ENCODE measurements at regions of chr2 and their contacts with region 1.

Region 1: DNA sequence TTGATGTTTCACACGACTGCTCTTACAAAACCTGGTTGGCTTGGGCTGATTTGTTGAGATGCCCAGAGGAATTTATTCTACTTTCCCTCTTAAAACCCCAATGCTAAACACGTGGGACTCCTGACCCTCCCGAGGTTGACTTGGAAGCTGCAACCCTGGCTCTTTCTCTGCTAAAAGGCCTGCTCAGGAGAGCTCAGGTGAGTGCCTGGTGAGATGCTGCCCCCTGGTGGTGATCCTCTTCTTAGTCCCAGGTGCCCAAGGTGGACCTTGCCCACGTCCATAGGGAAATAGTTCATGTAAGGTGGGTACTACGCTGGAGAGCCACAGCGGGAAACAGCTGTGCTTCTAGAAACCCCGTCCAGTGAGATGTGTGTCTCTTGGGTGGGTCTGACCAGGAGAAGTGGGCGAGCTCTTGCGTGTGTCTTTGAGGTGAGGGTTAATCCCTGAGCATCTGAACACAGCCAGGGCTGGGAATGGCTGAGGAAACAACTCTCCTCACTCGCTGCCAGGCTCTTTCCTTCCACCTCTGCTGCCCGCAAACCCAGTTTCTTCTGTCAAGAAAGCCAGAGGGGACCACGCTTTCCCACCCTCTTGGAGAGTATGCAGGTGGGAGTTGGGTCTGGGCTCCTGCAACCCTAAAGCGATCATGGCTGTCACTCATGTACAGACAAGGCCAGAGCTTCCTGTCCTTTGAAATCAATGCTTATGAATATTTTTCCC is 25.5 kb upstream of the PXDN start:
- DNase-seq: peak; percentile 93
- H3K4me3 ChIP-seq: no peak overlapping the region; a peak in 1 of 4 replicates
- H3K27ac ChIP-seq: no peak overlapping the region
- H3K4me1 ChIP-seq: no peaks in the 10 kb centered on the region; a peak in 1 of 4 replicates
- H3K27me3 ChIP-seq: no peaks in the 10 kb centered on the region
- CTCF ChIP-seq: peak; percentile 94
- EP300 ChIP-seq: no peak
- RAD21 ChIP-seq: peak; percentile 93

Region 2: GRCh38 chr2:1544478-1545069 is 225.3 kb before region 1 on chr2:
- CTCF ChIA-PET with region 1: interaction called, 122 read pairs
- POLR2A ChIA-PET with region 1: no interaction called
- DNase-seq: no peak
- H3K4me3 ChIP-seq: no peak overlapping the region
- H3K27ac ChIP-seq: no peak overlapping the region
- H3K4me1 ChIP-seq: peaks cover 0 to 34% of the 10 kb centered on the region in 2 experiments; a peak in 2 of 4 replicates
- H3K27me3 ChIP-seq: no peaks in the 10 kb centered on the region
- CTCF ChIP-seq: no peak
- EP300 ChIP-seq: no peak
- RAD21 ChIP-seq: no peak

Region 3: GRCh38 chr2:1591978-1592907 is 177.6 kb before region 1 on chr2:
- CTCF ChIA-PET with region 1: interaction called, 82 read pairs
- POLR2A ChIA-PET with region 1: no interaction called
- DNase-seq: peak; percentile 83
- H3K4me3 ChIP-seq: no peak overlapping the region
- H3K27ac ChIP-seq: no peak overlapping the region
- H3K4me1 ChIP-seq: peaks cover 14 to 44% of the 10 kb centered on the region in 2 experiments; a peak in 2 of 4 replicates
- H3K27me3 ChIP-seq: no peaks in the 10 kb centered on the region
- CTCF ChIP-seq: peak; percentile 50
- EP300 ChIP-seq: 0 out of 4 replicates have a peak, but pooled peaks of 1 of the 2 experiments have one; percentile 8
- RAD21 ChIP-seq: peak; percentile 75

Region 4: GRCh38 chr2:1653956-1654695 is 115.7 kb before region 1 on chr2:
- CTCF ChIA-PET with region 1: no interaction called
- POLR2A ChIA-PET with region 1: no interaction called
- DNase-seq: no peak
- H3K4me3 ChIP-seq: no peak overlapping the region
- H3K27ac ChIP-seq: peak overlapping the region in 1 of 2 experiments; percentile 81; a peak in 2 of 4 replicates
- H3K4me1 ChIP-seq: peaks cover 0 to 24% of the 10 kb centered on the region in 2 experiments; a peak in 2 of 4 replicates
- H3K27me3 ChIP-seq: no peaks in the 10 kb centered on the region
- CTCF ChIP-seq: no peak
- EP300 ChIP-seq: no peak
- RAD21 ChIP-seq: no peak

Region 5: DNA sequence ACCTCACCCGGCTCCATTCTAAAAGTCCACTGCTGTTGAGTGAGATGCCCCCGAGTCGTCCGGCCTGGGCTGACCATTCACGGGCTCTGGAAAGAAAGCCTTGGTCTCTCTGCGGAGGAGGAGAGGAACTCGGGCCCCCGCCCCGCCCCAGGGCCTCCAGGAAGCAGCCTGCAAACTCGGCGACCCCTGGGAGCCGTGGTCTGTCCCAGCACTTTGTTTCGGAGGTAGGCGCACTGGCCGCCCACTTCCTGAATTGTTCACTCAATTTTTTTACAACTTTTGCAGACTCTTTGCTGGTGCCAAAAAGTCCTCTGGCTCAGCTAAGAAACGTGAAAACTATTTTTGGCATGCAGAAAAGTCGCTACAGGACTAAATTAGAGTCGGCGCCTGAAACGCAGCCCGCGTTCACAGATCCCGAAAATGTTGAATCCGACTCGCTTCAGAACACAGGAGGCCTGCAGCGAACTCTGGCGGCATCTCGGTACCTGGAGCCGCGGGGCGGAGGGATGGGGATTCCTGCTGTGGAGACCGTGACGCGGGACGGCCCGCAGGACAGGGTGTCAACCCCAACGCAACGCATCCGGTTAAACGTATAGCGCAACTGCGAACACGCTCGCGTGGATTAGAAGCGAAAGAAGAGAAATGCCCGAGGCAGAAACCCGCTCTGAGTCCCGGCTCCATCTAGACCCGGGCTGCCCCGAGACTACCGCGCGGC is 27.0 kb before region 1 on chr2:
- CTCF ChIA-PET with region 1: interaction called, 15 read pairs
- POLR2A ChIA-PET with region 1: no interaction called
- DNase-seq: peak; percentile 89
- H3K4me3 ChIP-seq: peak overlapping the region; percentile 84 to 91
- H3K27ac ChIP-seq: peak overlapping the region; percentile 95 to 98
- H3K4me1 ChIP-seq: peaks cover 30 to 57% of the 10 kb centered on the region in 2 experiments; a peak in 3 of 4 replicates
- H3K27me3 ChIP-seq: no peaks in the 10 kb centered on the region
- CTCF ChIP-seq: peak; percentile 84
- EP300 ChIP-seq: no peak; a peak in 2 of 4 replicates
- RAD21 ChIP-seq: peak; percentile 87

Region 6: DNA sequence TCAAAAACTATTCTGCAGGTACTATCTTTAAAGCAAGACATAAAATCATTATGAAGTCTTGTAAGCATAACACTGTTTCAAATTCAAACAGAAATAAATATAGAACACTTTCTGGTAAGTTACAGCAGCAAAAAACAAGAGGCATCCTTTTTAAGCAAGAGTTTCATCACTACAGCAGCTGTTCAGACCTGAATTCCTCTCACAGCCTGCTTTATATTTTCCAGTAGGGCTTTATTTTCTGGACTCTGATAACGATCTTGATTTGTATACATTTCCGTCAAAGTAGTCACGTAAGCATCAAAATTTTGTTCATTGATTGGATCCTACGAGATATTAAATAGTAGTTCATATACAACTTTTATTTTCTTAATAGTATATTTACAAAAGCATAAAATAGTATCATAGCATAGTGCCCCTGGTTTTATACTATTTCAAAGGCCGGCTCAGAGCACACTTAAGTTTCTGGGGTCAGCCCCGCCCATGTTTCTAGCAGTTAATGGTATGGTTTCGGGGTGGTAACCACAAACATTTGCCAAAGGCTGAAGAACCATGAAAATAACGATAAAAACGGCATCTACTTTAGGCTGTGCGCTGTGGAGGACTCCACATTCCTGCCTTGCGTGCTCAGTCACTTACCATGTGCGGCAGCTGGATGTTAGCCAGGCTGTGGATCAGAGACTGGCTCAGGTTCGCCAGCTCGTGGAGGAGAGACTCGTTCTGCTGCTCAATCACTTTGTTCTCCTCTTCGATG is 22.0 kb after region 1 on chr2:
- CTCF ChIA-PET with region 1: interaction called, 12 read pairs
- POLR2A ChIA-PET with region 1: no interaction called
- DNase-seq: no peak
- H3K4me3 ChIP-seq: no peak overlapping the region
- H3K27ac ChIP-seq: no peak overlapping the region
- H3K4me1 ChIP-seq: peaks cover 0 to 7% of the 10 kb centered on the region in 2 experiments; a peak in 1 of 4 replicates
- H3K27me3 ChIP-seq: no peaks in the 10 kb centered on the region
- CTCF ChIP-seq: no peak
- EP300 ChIP-seq: no peak
- RAD21 ChIP-seq: no peak

Region 7: DNA sequence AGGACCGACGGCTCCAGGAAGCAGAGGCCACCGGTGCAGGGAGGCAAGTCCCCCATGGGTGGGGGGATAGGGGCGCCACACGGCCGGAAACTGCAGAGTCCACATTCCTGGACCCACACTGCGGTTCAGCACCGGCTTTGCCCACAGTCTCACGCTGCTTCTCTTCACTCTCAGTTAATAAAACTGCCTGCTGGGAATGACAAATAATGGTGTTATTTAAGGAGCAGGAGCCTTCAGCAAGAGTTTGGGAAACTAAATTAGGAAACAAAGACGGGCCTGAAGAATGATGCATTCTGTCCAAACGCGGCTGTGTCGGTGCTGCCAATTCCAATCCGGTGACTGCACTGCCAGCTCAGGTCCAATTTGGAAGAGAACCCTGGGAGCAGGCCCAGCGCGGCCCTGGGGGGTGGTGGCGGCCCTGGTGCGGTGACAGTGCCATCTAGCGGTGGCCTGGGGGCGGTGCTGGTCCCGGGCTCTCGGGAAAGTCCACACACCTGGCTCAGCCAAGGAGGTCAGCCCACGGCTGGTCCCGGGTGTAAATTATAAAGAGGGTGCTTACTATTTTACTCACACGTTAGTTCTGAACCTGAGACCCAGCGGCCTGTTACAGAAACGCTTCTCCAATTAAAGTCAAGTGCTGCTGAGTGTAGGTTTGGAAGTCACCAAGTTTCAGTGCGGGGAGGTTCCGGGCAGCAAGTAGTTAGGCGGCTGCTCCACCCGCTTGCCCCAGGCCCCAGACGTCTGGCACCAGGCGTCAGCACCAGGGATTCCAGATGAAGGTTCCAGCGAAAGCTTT is 47.6 kb after region 1 on chr2:
- CTCF ChIA-PET with region 1: interaction called, 15 read pairs
- POLR2A ChIA-PET with region 1: no interaction called
- DNase-seq: peak; percentile 99
- H3K4me3 ChIP-seq: peak overlapping the region in 1 of 2 experiments; percentile 23; a peak in 1 of 4 replicates
- H3K27ac ChIP-seq: peak overlapping the region; percentile 36 to 86; a peak in 3 of 4 replicates
- H3K4me1 ChIP-seq: peaks cover 0 to 14% of the 10 kb centered on the region in 2 experiments; a peak in 1 of 4 replicates
- H3K27me3 ChIP-seq: no peaks in the 10 kb centered on the region
- CTCF ChIP-seq: peak; percentile 100
- EP300 ChIP-seq: peak in 1 of 2 experiments; percentile 73; a peak in 2 of 4 replicates
- RAD21 ChIP-seq: peak; percentile 76

Region 8: GRCh38 chr2:1923541-1923940 is 153.7 kb after region 1 on chr2:
- CTCF ChIA-PET with region 1: no interaction called
- POLR2A ChIA-PET with region 1: no interaction called
- DNase-seq: no peak
- H3K4me3 ChIP-seq: no peak overlapping the region
- H3K27ac ChIP-seq: peak overlapping the region in 1 of 2 experiments; percentile 50; a peak in 1 of 4 replicates
- H3K4me1 ChIP-seq: peaks cover 0 to 17% of the 10 kb centered on the region in 2 experiments; a peak in 2 of 4 replicates
- H3K27me3 ChIP-seq: no peaks in the 10 kb centered on the region
- CTCF ChIP-seq: no peak
- EP300 ChIP-seq: no peak
- RAD21 ChIP-seq: no peak